ENCODE measurements at regions of chr12 and their contacts with region 1.

Region 1: DNA sequence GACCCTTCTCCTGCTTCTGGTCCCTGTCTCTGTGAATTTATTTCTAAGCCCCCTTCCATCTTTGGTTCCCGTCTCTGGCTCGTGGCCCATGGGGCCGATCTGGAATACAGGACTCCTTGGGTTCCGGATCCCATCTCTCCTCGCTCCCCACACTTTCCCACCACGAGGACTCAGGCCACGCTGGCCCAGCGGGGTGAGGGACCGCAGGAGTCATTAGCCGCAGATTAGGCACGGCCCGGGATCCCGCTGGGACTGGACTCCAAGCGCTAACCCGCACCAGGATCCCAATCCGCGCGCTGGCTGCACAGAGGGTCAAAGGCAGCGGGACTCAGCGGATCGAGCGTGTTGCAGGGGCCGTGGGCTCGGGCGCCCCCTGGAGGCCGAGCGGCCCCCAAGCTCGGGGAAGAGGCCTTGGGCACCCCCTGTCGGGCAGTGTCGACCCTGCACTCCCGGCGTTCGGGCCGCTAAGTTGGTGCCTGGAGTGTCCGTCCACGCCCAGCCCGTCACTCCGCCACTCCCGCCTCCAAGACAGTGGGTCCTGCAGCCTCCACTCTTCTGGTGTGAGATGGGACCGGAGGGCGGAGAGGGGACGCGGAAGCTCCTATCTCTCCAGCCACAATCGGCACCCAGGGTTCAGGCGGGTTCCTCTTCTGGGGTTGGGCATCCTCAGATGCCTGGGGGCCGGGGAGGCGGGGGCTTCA is 9.5 kb downstream of the SHMT2 start:
- DNase-seq: peak; percentile 98
- H3K4me3 ChIP-seq: peak overlapping the region; percentile 58 to 72
- H3K27ac ChIP-seq: peak overlapping the region in 1 of 2 experiments; percentile 64; a peak in 1 of 4 replicates
- H3K4me1 ChIP-seq: peaks cover 23 to 58% of the 10 kb centered on the region in 2 experiments; a peak in 2 of 4 replicates
- H3K27me3 ChIP-seq: peaks cover 19% of the 10 kb centered on the region; the same call in 1 of the 2 replicates
- CTCF ChIP-seq: peak; percentile 99
- EP300 ChIP-seq: no peak
- RAD21 ChIP-seq: peak; percentile 80

Region 2: DNA sequence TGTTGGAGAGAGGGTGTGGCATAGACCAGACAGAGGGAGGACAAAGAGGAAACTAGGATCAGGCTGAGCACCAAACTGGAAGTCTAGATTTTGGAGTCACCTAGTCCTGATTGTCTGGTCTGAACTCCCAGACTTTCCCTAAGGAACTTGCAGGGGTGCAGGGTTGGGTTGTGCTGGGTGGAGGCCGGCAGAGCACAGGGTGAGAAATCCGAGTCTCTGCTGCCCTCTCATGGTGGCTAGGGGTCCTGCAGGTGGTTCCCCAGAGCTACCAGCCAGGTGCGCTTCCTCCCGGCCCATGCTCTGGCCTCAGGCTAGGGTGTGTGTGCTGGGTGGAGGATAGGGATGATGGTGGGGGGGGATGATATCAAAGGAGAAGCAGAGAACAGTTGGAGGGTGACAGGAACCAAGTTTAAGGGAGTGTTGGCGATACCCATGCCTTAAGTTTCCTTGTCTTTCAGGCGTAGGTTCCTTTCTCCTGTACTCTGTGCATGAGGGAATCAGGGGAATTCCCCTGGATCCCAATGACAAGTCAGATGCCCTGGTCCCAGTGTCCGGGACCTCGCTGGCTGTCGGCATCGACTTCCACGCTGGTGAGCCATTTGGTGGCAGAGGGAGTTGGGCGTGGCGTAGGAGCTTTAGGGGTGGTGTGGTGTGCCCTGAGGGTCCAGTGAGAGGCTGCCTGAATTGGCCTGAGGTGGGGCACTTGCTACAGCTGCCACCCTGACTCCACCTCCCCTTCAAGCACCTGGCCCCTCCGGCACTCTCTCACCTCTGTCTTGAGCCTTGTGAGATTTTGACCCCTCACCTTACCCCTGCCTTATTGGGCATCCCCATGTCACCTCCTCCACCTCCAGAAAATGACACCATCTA is 55.8 kb before region 1 on chr12:
- CTCF ChIA-PET with region 1: interaction called, 80 read pairs
- POLR2A ChIA-PET with region 1: interaction called, 3 read pairs
- DNase-seq: peak; percentile 96
- H3K4me3 ChIP-seq: no peak overlapping the region
- H3K27ac ChIP-seq: no peak overlapping the region
- H3K4me1 ChIP-seq: no peaks in the 10 kb centered on the region
- H3K27me3 ChIP-seq: no peaks in the 10 kb centered on the region
- CTCF ChIP-seq: peak; percentile 87
- EP300 ChIP-seq: no peak
- RAD21 ChIP-seq: peak; percentile 90

Region 3: GRCh38 chr12:57248934-57249742 is 10.1 kb after region 1 on chr12:
- CTCF ChIA-PET with region 1: interaction called, 271 read pairs
- POLR2A ChIA-PET with region 1: interaction called, 3 read pairs
- DNase-seq: no peak
- H3K4me3 ChIP-seq: no peak overlapping the region
- H3K27ac ChIP-seq: no peak overlapping the region
- H3K4me1 ChIP-seq: no peaks in the 10 kb centered on the region; a peak in 1 of 4 replicates
- H3K27me3 ChIP-seq: no peaks in the 10 kb centered on the region
- CTCF ChIP-seq: no peak
- EP300 ChIP-seq: no peak
- RAD21 ChIP-seq: no peak

Region 4: DNA sequence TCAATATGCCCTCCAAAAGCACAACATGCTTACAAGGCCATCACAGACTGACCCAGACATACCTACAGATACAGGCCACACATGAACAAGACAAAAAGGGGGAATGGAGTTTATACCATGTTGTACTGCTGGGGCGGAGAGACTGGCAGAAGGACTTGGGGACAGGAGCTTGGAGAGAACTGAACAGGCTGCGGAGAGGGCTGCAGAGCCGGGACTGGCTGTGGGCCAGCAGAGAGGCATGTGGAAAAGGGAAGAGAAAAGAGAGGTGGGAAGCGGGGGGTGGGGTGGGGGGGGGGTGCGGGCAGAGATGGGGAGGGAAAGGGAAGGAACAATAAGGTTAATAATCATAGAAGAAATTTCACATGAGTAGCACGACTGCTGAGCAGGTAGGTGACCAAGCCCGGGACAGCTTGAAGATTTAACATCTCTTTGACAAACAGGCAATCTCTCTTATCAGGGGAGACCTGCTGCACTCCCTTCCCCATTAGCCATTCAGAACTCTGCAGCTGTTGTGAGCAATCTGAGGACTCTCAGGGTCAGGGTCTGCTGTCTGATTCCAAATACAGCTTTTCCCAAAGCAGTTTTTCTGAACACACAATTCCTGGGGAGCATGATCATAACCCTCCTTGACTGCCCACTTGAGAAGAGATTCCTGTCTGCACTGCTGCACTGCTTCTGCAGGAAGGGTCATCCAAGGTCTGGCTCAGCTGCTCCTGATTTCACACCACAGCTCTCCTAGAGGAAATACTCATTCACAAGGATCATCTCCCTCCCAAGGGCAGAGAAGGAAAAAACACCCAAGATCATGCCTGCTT is 33.5 kb after region 1 on chr12:
- CTCF ChIA-PET with region 1: interaction called, 45 read pairs
- POLR2A ChIA-PET with region 1: no interaction called
- DNase-seq: peak; percentile 49
- H3K4me3 ChIP-seq: no peak overlapping the region
- H3K27ac ChIP-seq: peak overlapping the region; percentile 30 to 64; a peak in 2 of 4 replicates
- H3K4me1 ChIP-seq: peaks cover 7 to 12% of the 10 kb centered on the region in 2 experiments; a peak in 2 of 4 replicates
- H3K27me3 ChIP-seq: no peaks in the 10 kb centered on the region
- CTCF ChIP-seq: no peak
- EP300 ChIP-seq: no peak
- RAD21 ChIP-seq: no peak

Region 5: GRCh38 chr12:57309420-57309819 is 70.4 kb after region 1 on chr12:
- CTCF ChIA-PET with region 1: no interaction called
- POLR2A ChIA-PET with region 1: no interaction called
- DNase-seq: no peak
- H3K4me3 ChIP-seq: no peak overlapping the region
- H3K27ac ChIP-seq: peak overlapping the region in 1 of 2 experiments; percentile 52; a peak in 3 of 4 replicates
- H3K4me1 ChIP-seq: peaks cover 0 to 14% of the 10 kb centered on the region in 2 experiments; a peak in 1 of 4 replicates
- H3K27me3 ChIP-seq: no peaks in the 10 kb centered on the region
- CTCF ChIP-seq: no peak
- EP300 ChIP-seq: no peak
- RAD21 ChIP-seq: no peak